ENCODE measurements at regions of chr2 and their contacts with region 1.

Region 1: GRCh38 chr2:190069936-190070696 is 7.6 kb upstream of the MSTN start:
- DNase-seq: no peak
- H3K4me3 ChIP-seq: no peak overlapping the region
- H3K27ac ChIP-seq: no peak overlapping the region
- H3K4me1 ChIP-seq: peaks cover 0 to 4% (median 0%) of the 10 kb centered on the region in 4 donors
- H3K27me3 ChIP-seq: no peaks in the 10 kb centered on the region
- CTCF ChIP-seq: peak; percentile 50 to 67 (median 64)
- EP300 ChIP-seq: no peak
- POLR2A ChIP-seq: no peak

Region 2: GRCh38 chr2:189762551-189763298 is 307.4 kb before region 1 on chr2 and contains the start of gene OSGEPL1:
- in situ Hi-C with region 1: loop called in 1 of 4 experiments (anchors 25 kb)
- intact Hi-C with region 1: no loop called
- DNase-seq: peak; percentile 94
- H3K4me3 ChIP-seq: peak within 1 kb of the TSS; percentile 56 to 72 (median 64)
- H3K27ac ChIP-seq: peak within 1 kb of the TSS; percentile 82 to 94 (median 94)
- H3K4me1 ChIP-seq: peaks cover 4 to 18% (median 7%) of the 10 kb centered on the region in 4 donors
- H3K27me3 ChIP-seq: no peaks in the 10 kb centered on the region
- CTCF ChIP-seq: peak; percentile 38 to 59 (median 50)
- EP300 ChIP-seq: no peak
- POLR2A ChIP-seq: peak; percentile 37
- total RNA-seq, gene OSGEPL1: 2.7 to 14.7 (median 5.1) TPM in 3 of 4 donors, not detected in the other

Region 3: GRCh38 chr2:189821953-189822748 is 248.0 kb before region 1 on chr2:
- in situ Hi-C with region 1: loop called in 1 of 4 experiments (anchors 25 kb)
- intact Hi-C with region 1: no loop called
- DNase-seq: no peak
- H3K4me3 ChIP-seq: no peak overlapping the region
- H3K27ac ChIP-seq: no peak overlapping the region
- H3K4me1 ChIP-seq: peaks cover 0 to 4% (median 0%) of the 10 kb centered on the region in 4 donors
- H3K27me3 ChIP-seq: no peaks in the 10 kb centered on the region
- CTCF ChIP-seq: no peak
- EP300 ChIP-seq: no peak
- POLR2A ChIP-seq: no peak